CD4-positive, alpha-beta memory T cell (primary cell): ENCODE measurements at regions of chrX and their contacts with region 1.

Region 1: DNA sequence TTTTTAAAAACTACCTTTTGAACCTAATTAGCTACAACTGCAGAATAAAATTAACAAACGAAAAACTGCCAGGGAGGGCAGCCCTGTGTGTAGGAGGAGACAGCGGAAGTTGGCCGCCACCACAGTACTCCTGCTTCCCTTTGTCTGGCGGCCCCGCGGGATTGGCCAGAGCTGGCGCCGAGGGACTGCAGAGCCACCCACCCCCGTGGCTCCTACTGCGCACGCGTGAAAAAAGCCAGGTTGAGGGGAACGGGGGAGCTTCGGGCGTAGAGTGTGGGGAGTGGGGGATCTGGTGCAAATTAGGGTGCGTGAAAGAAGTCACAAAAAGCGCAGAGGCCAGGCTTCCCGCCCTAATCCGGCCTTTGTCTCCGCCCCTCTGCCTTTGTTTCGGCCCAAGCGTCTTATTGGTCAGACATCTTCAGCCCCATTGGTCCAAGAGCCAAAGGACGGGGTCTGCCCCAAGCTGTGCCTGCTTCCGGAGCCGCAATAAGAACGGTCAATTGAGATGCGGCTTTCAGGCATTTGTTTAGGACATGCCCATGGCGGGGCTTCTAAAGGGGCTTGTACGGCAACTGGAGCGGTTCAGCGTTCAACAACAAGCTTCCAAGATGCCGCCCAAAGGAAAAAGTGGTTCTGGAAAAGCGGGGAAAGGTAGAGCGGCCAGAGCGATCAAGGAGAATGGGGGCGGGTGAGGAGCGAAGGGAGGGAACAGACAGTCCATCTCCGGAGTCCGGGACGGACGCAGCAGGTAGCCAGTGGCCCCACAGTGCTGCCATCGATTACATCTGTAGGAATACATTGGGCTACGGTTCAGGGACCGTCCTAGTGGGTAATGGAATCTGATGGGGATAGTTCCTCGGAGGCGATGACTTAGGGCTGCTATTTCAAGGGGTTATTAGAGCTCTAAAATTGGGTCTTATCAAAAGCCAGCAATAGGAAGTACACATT is at the start of gene PIN4:
- DNase-seq: peak; percentile 82 to 87 (median 84)
- H3K4me3 ChIP-seq: peak within 1 kb of the TSS; percentile 69
- H3K4me3 Mint-ChIP-seq: peak within 1 kb of the TSS in 1 of 8 donors; percentile 17
- H3K27ac ChIP-seq: peak within 1 kb of the TSS; percentile 68
- H3K27ac Mint-ChIP-seq: no peak within 1 kb of the TSS
- H3K4me1 ChIP-seq: peaks cover 24% of the 10 kb centered on the region
- H3K4me1 Mint-ChIP-seq: peaks cover 6 to 13% (median 8%) of the 10 kb centered on the region in 4 donors
- H3K27me3 ChIP-seq: no peaks in the 10 kb centered on the region
- H3K27me3 Mint-ChIP-seq: no peaks in the 10 kb centered on the region
- total RNA-seq, gene PIN4: 13.3 to 13.5 TPM

Region 2: DNA sequence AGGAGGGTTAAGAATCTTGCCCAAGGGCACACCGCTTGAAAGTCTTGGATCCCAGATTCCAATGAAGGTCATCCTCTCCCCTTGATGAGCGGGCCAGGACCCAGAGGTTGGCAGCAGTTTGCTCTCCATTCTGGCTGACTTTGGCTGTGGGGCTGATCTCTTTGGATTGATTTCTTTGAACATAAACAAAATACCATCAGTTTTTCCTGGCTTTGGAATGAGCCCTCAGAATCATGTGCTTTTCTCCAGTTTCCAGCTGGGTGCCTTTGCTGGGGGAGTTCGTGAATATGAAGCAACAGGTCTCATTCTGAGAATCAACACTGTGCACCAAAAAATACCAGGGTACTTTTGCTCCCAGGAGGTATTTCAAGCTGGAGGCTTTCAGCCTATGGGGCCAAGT is 173.8 kb before region 1 on chrX:
- CTCF ChIA-PET with region 1: no interaction called
- POLR2A ChIA-PET with region 1: no interaction called
- intact Hi-C with region 1: no loop called
- DNase-seq: no peak
- H3K4me3 ChIP-seq: no peak overlapping the region
- H3K4me3 Mint-ChIP-seq: no peak overlapping the region
- H3K27ac ChIP-seq: no peak overlapping the region
- H3K27ac Mint-ChIP-seq: no peak overlapping the region
- H3K4me1 ChIP-seq: no peaks in the 10 kb centered on the region
- H3K4me1 Mint-ChIP-seq: no peaks in the 10 kb centered on the region
- H3K27me3 ChIP-seq: no peaks in the 10 kb centered on the region
- H3K27me3 Mint-ChIP-seq: peaks cover 0 to 1% of the 10 kb centered on the region in 2 donors

Region 3: DNA sequence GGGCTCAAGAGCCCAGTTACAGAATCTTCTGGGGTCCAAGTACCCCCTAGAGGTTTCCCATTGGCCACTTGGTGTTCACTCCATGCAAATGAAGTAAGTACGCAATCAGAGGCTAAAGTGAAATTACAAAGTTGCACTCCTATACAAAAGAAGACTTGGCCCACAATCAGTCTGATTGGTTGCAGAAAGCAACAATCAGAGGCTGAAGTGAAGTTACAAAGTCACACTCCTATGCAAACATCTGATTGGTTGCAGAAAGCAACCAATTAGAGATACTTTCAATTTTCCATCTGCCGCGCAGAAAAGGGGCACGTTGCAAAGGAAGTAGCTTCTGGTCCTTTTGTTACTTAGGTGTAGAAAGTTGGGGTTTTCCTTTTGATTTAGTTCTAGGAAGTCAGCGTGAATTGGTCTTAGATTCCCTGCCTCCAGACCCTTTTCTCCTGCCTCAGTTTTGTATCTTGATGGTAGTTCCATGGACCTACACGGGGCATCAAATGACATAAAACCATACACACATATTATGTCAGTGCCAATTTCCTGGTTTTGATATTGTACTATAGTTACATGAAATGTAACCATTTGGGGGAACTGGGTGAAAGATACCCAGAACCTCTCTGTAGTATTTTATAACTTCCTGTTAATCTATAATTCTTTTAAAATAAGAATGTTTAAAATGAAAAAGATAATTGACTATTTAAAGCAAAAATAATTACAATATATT is 12.3 kb before region 1 on chrX:
- CTCF ChIA-PET with region 1: no interaction called
- POLR2A ChIA-PET with region 1: interaction called, 15 read pairs
- intact Hi-C with region 1: loop called (anchors 1 kb)
- DNase-seq: peak; percentile 61 to 77 (median 70)
- H3K4me3 ChIP-seq: peak overlapping the region in 1 of 2 donors; percentile 25
- H3K4me3 Mint-ChIP-seq: peak overlapping the region; percentile 74 to 88 (median 86)
- H3K27ac ChIP-seq: peak overlapping the region; percentile 56
- H3K27ac Mint-ChIP-seq: peak overlapping the region; percentile 75 to 99 (median 97)
- H3K4me1 ChIP-seq: peaks cover 4% of the 10 kb centered on the region
- H3K4me1 Mint-ChIP-seq: peaks cover 0 to 11% (median 6%) of the 10 kb centered on the region in 4 donors
- H3K27me3 ChIP-seq: no peaks in the 10 kb centered on the region
- H3K27me3 Mint-ChIP-seq: no peaks in the 10 kb centered on the region

Region 4: DNA sequence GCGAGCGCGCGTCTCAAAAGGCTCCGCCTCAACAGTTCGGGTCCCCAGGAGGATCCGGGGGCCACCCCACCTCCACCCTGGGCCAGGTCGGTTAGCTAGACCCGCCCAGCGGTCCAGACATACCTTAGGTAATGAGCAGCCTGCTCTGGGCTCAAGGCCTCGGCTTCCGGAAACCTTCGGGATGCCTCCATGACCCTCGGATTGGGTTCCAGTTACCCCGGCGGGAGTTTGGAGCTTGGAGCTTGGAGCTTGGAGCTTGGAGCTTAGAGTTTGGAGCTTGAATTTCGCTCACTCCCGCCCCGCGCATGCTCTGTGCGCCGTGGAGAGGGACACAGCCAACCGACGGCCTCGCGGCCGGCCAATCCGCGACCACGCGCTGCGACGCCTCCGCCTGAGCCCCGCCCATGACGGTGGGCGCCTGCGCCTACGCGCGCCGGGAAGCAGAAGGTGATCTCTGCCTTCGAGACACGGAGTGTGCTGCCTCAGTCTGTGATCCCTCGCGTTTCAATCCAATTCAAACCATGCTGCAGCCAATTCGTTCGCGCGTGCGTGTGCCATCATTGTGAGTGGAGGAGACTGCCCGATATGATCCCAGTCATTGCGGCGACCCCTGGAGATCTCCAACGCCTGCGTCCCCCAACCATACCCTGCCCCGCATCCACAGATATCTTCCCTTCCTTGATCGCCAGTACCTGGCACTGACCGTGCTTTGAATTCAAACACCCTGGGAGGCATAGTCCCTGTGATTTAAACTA is 57.4 kb after region 1 on chrX and contains the start of gene ERCC6L:
- CTCF ChIA-PET with region 1: no interaction called
- POLR2A ChIA-PET with region 1: interaction called, 3 read pairs
- intact Hi-C with region 1: loop called (anchors 10 kb)
- DNase-seq: peak; percentile 80 to 85 (median 83)
- H3K4me3 ChIP-seq: peak within 1 kb of the TSS; percentile 46 to 52
- H3K4me3 Mint-ChIP-seq: peak within 1 kb of the TSS; percentile 67 to 84 (median 74)
- H3K27ac ChIP-seq: no peak within 1 kb of the TSS
- H3K27ac Mint-ChIP-seq: peak within 1 kb of the TSS; percentile 50 to 85 (median 60)
- H3K4me1 ChIP-seq: peaks cover 3% of the 10 kb centered on the region
- H3K4me1 Mint-ChIP-seq: peaks cover 0 to 7% (median 3%) of the 10 kb centered on the region in 4 donors
- H3K27me3 ChIP-seq: no peaks in the 10 kb centered on the region
- H3K27me3 Mint-ChIP-seq: no peaks in the 10 kb centered on the region
- total RNA-seq, gene ERCC6L: 0.15 to 0.28 TPM